ENCODE measurements at regions of chr11 and their contacts with region 1.

Region 1: GRCh38 chr11:123159183-123159857 is 35.7 kb downstream of the CLMP start:
- DNase-seq: peak; percentile 68 to 90
- H3K4me3 ChIP-seq: no peak overlapping the region
- H3K27ac ChIP-seq: peak overlapping the region; percentile 84 to 93
- H3K4me1 ChIP-seq: peaks cover 2 to 42% of the 10 kb centered on the region in 2 donors
- H3K27me3 ChIP-seq: no peaks in the 10 kb centered on the region
- CTCF ChIP-seq: no peak

Region 2: GRCh38 chr11:122367809-122368231 is 791.5 kb before region 1 on chr11:
- intact Hi-C with region 1: no loop called
- DNase-seq: peak in 1 of 2 donors; percentile 71
- H3K4me3 ChIP-seq: peak overlapping the region in 1 of 2 donors; percentile 62
- H3K27ac ChIP-seq: peak overlapping the region; percentile 71 to 82
- H3K4me1 ChIP-seq: peaks cover 0 to 10% of the 10 kb centered on the region in 2 donors
- H3K27me3 ChIP-seq: no peaks in the 10 kb centered on the region
- CTCF ChIP-seq: no peak

Region 3: DNA sequence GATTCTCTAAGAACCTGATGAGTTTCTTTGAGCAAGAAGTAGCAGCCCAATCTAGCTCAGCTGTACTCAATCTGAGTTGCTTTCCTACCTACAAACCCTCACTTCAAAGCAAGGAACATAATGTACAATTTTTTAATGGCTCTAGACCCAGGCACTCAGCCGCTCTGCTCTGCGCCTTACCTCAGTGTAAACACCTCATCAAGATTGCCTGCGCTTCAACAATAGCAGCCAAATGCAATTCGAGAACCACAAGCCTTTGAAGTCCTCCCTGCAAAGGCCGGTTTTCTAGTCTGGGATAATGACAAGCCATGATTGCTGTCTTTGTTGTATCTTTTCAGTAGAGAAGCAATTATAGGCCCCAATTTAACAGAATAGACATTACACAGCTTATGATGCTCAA is 238.7 kb before region 1 on chr11:
- intact Hi-C with region 1: no loop called
- DNase-seq: no peak
- H3K4me3 ChIP-seq: no peak overlapping the region
- H3K27ac ChIP-seq: no peak overlapping the region
- H3K4me1 ChIP-seq: no peaks in the 10 kb centered on the region
- H3K27me3 ChIP-seq: no peaks in the 10 kb centered on the region
- CTCF ChIP-seq: no peak

Region 4: GRCh38 chr11:123122341-123122740 is 37.0 kb before region 1 on chr11:
- intact Hi-C with region 1: loop called (anchors 2 kb)
- DNase-seq: peak in 1 of 2 donors; percentile 89
- H3K4me3 ChIP-seq: peak overlapping the region in 1 of 2 donors; percentile 4
- H3K27ac ChIP-seq: peak overlapping the region; percentile 89 to 91
- H3K4me1 ChIP-seq: peaks cover 3 to 31% of the 10 kb centered on the region in 2 donors
- H3K27me3 ChIP-seq: no peaks in the 10 kb centered on the region
- CTCF ChIP-seq: no peak

Region 5: GRCh38 chr11:123137431-123138224 is 21.7 kb before region 1 on chr11:
- intact Hi-C with region 1: loop called (anchors 2 kb)
- DNase-seq: peak; percentile 42 to 94
- H3K4me3 ChIP-seq: peak overlapping the region; percentile 29 to 56
- H3K27ac ChIP-seq: peak overlapping the region in 1 of 2 donors; percentile 87
- H3K4me1 ChIP-seq: peaks cover 3 to 41% of the 10 kb centered on the region in 2 donors
- H3K27me3 ChIP-seq: no peaks in the 10 kb centered on the region
- CTCF ChIP-seq: peak in 1 of 3 experiments; percentile 16

Region 6: DNA sequence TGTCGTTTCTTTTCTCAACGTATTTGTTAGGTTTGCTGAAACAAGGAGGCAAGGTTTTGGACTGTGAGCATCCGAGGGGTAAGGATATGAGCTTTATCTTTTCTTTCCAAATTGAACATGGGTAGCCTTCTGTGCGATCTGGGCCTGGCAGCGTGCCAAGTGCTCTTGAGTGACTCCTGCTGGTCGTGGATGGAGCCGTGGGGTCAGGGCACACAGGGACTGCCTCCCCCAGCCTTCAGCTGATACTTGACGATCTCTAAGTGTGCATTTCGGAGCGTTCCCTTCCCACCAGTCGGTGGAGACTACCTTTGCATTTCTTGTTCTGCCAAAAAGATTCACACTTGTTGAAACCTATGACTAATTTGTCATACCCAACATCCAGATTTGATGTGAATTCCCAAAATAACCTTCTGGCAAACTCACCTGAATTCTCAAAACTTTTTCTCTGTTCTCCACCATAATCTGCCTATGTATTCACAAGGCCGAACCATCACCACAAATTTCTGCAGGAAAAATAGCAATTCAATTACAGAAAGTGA is 75.9 kb after region 1 on chr11:
- intact Hi-C with region 1: loop called (anchors 5 kb)
- DNase-seq: peak in 1 of 2 donors; percentile 82
- H3K4me3 ChIP-seq: peak overlapping the region in 1 of 2 donors; percentile 25
- H3K27ac ChIP-seq: peak overlapping the region; percentile 58 to 59
- H3K4me1 ChIP-seq: peaks cover 0 to 3% of the 10 kb centered on the region in 2 donors
- H3K27me3 ChIP-seq: no peaks in the 10 kb centered on the region
- CTCF ChIP-seq: peak; percentile 63 to 83 (median 63)

Region 7: GRCh38 chr11:123246749-123247495 is 87.6 kb after region 1 on chr11:
- intact Hi-C with region 1: no loop called
- DNase-seq: peak in 1 of 2 donors; percentile 89
- H3K4me3 ChIP-seq: peak overlapping the region in 1 of 2 donors; percentile 24
- H3K27ac ChIP-seq: no peak overlapping the region
- H3K4me1 ChIP-seq: peaks cover 0 to 4% of the 10 kb centered on the region in 2 donors
- H3K27me3 ChIP-seq: no peaks in the 10 kb centered on the region
- CTCF ChIP-seq: peak; percentile 90 to 98 (median 95)